ENCODE measurements at regions of chr6 and their contacts with region 1.

Region 1: DNA sequence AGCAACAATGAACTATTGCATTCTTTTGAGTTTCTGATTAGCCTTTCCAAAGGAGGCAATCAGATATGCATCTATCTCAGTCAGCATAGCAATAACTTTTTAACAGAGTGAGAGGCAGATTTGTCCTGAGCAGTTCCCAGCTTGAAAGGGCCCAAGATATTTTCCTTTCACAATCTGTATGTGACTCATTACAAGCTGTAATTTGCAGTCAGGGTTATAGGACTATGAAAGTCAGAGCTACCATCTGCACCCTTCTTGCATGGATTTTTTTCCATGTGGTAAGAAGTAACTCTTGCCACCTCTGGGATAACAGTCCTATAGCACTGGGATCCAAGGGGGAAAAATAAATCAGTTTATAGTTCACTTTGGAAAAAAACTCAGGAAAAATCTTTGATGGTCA is 318.2 kb upstream of the RGS17 start:
- DNase-seq: no peak
- H3K4me3 ChIP-seq: no peak overlapping the region
- H3K27ac ChIP-seq: no peak overlapping the region
- H3K4me1 ChIP-seq: no peaks in the 10 kb centered on the region
- H3K27me3 ChIP-seq: no peaks in the 10 kb centered on the region
- CTCF ChIP-seq: no peak
- POLR2A ChIP-seq: no peak

Region 2: GRCh38 chr6:153537422-153537821 is 88.1 kb after region 1 on chr6:
- intact Hi-C with region 1: loop called (anchors 5 kb)
- DNase-seq: no peak
- H3K4me3 ChIP-seq: no peak overlapping the region
- H3K27ac ChIP-seq: no peak overlapping the region
- H3K4me1 ChIP-seq: no peaks in the 10 kb centered on the region
- H3K27me3 ChIP-seq: no peaks in the 10 kb centered on the region
- CTCF ChIP-seq: no peak
- POLR2A ChIP-seq: no peak

Region 3: DNA sequence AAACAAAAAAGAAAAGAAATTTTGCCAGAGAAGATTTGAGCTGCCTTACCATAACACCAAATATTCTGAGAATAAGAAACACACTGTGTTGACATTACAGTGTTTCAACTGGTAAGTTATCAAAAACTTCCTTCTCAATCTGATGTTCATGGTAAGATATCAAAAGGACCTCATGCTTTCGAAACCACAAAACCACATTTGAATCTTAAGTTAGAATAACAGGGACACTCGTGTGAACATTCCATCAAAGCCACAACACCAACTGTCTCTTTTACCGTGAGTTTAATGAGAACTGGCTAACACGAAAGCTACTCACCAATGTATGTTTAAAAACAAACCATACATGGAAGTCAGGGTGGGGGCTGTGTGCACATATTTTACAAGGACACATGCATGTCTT is 516.7 kb after region 1 on chr6:
- intact Hi-C with region 1: no loop called
- DNase-seq: no peak
- H3K4me3 ChIP-seq: no peak overlapping the region
- H3K27ac ChIP-seq: no peak overlapping the region
- H3K4me1 ChIP-seq: no peaks in the 10 kb centered on the region
- H3K27me3 ChIP-seq: no peaks in the 10 kb centered on the region
- CTCF ChIP-seq: no peak
- POLR2A ChIP-seq: no peak

Measured in breast epithelium (tissue), 4 donors.